Tibial artery (tissue), 4 donors: ENCODE measurements at regions of chr1 and their contacts with region 1.

Region 1: GRCh38 chr1:78676347-78676982 is 26.8 kb downstream of the IFI44 start:
- DNase-seq: peak in 1 of 2 donors; percentile 67
- H3K4me3 ChIP-seq: no peak overlapping the region
- H3K27ac ChIP-seq: no peak overlapping the region
- H3K4me1 ChIP-seq: no peaks in the 10 kb centered on the region
- H3K27me3 ChIP-seq: no peaks in the 10 kb centered on the region
- CTCF ChIP-seq: peak; percentile 81 to 83

Region 2: GRCh38 chr1:78145105-78145580 is 531.3 kb before region 1 on chr1:
- intact Hi-C with region 1: loop called (anchors 10 kb)
- DNase-seq: peak in 1 of 2 donors; percentile 45
- H3K4me3 ChIP-seq: no peak overlapping the region
- H3K27ac ChIP-seq: no peak overlapping the region
- H3K4me1 ChIP-seq: no peaks in the 10 kb centered on the region
- H3K27me3 ChIP-seq: peaks cover 0 to 3% of the 10 kb centered on the region in 2 donors
- CTCF ChIP-seq: peak; percentile 66 to 75

Region 3: DNA sequence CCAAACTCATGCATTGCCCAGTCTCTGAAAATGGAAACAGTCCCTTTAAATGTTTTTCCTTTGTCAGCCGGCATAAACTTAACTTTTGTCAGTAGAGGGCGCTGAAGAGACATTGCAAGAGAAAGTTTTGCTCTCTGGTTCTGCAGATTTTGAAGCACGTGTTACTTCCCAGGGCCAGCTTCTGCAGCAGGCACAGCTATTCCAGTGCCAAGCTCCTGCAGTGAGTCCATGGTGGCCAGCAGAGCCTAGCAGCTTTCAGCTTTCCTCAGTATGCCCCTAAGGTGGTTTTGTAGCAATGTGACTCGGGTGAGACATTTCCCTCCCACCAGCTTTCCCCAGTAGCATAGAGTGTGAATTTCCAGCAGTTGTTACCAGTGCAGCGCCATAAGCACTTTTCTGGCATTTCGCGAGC is 58.8 kb before region 1 on chr1:
- intact Hi-C with region 1: loop called (anchors 2 kb)
- DNase-seq: peak; percentile 73 to 83
- H3K4me3 ChIP-seq: no peak overlapping the region
- H3K27ac ChIP-seq: peak overlapping the region in 1 of 2 donors; percentile 4
- H3K4me1 ChIP-seq: peaks cover 0 to 29% (median 2%) of the 10 kb centered on the region in 4 donors
- H3K27me3 ChIP-seq: no peaks in the 10 kb centered on the region
- CTCF ChIP-seq: peak; percentile 77 to 91

Region 4: DNA sequence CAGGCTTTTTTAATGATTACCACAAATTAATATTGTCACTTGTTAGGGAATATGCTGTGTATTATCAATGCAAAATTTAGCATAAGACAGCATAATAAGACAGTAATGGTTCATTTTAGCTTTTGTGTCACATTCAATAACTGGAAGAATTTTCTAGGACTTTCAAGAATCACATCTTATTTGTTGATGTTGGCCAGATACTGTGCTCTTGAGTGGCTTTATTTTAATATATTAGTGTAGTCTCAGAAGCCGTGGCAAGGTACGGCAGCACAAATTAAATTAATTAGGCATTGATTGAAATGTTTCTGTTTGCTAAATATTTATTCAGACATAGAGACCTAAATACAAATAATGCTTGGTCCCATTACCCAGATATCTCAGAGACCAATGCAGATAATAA is 45.9 kb before region 1 on chr1:
- intact Hi-C with region 1: no loop called
- DNase-seq: no peak
- H3K4me3 ChIP-seq: no peak overlapping the region
- H3K27ac ChIP-seq: no peak overlapping the region
- H3K4me1 ChIP-seq: no peaks in the 10 kb centered on the region
- H3K27me3 ChIP-seq: no peaks in the 10 kb centered on the region
- CTCF ChIP-seq: no peak

Region 5: GRCh38 chr1:78688701-78689100 is 12.2 kb after region 1 on chr1:
- intact Hi-C with region 1: no loop called
- DNase-seq: no peak
- H3K4me3 ChIP-seq: no peak overlapping the region
- H3K27ac ChIP-seq: no peak overlapping the region
- H3K4me1 ChIP-seq: no peaks in the 10 kb centered on the region
- H3K27me3 ChIP-seq: no peaks in the 10 kb centered on the region
- CTCF ChIP-seq: no peak